Activated CD8-positive, alpha-beta memory T cell treated with anti-CD3 and anti-CD28 coated beads, Interleukin-2, amount 10 ng/mL, durations not matched to agents 7 days and 5 days (primary cell): ENCODE measurements at regions of chr7 and their contacts with region 1.

Region 1: DNA sequence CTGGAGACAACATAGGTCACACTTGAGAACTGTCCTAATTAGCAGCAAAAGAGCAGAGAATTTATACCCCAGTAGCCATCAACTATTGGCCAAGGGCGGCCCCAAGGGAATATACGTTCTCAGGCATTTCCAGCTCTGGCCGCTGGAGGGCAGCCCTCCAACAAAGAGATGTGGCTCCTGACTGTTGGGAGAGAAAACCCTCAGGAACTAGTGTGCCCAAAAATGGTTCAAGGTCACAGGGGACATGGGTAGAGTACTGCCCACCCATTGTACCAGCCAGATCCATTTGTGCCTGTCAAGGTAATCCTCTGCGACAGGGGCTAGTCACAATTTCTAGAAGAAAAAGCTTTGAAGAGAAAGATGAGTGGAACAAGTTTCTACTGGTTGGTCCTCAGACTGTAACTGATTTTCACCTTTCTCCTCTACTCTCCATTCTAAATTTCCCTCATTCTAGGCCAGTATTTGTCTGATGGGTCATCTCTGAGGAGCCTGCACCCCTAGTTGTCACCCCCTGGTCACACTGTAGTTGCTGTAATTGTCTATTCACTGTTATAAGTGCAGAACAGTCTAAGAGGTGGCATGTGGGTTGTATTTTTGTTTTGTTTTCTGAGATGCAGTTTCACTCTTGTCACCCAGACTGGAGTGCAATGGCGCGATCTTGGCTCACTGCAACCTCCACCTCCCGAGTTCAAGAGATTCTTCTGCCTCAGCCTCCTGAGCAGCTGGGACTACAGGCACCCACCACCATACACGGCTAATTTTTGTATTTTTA is 14.7 kb upstream of the C7orf33 start:
- DNase-seq: peak; percentile 79
- ATAC-seq: peak; percentile 94
- H3K4me3 Mint-ChIP-seq: no peak overlapping the region
- H3K27ac Mint-ChIP-seq: peak overlapping the region; percentile 22
- H3K4me1 Mint-ChIP-seq: peaks cover 8% of the 10 kb centered on the region
- H3K27me3 Mint-ChIP-seq: peaks cover 29% of the 10 kb centered on the region

Region 2: GRCh38 chr7:148255333-148255732 is 320.5 kb before region 1 on chr7:
- CTCF ChIA-PET with region 1: no interaction called
- DNase-seq: no peak
- ATAC-seq: no peak
- H3K4me3 Mint-ChIP-seq: no peak overlapping the region
- H3K27ac Mint-ChIP-seq: no peak overlapping the region
- H3K4me1 Mint-ChIP-seq: no peaks in the 10 kb centered on the region
- H3K27me3 Mint-ChIP-seq: no peaks in the 10 kb centered on the region

Region 3: DNA sequence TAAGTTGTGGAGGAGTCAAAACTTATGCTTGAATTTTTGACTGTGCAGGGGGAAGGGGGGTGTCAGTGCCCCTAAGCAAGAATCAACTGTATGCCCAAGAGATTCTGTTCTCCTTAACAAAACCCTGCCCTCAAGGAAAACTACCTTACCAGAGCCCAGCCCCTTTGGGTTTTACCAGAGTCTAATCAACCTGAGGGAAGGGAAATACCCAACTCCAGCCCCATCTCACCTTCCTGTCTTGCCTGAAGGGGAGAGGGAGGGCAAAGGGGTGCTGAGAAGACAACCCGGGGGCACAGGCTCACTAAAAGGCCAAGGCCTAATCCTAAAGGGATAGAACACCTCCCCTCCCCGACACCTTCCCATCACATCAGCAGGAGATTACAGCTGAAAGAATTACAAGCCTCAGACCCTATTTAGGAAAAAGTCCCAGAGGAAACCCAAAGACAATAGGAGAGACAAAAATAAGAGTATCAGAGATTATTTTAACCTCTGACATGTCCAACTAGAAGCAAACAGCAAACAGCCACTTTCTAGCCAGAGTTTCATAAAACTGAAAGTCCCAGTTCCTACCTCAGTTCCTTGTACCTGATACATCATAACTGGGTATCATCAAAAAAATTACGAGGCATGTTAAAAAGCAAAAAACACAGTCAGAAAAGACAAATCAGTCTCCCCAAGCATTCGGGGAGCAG is 12.1 kb before region 1 on chr7:
- CTCF ChIA-PET with region 1: interaction called, 34 read pairs
- DNase-seq: no peak
- ATAC-seq: no peak
- H3K4me3 Mint-ChIP-seq: peak overlapping the region; percentile 51
- H3K27ac Mint-ChIP-seq: peak overlapping the region; percentile 95
- H3K4me1 Mint-ChIP-seq: peaks cover 26% of the 10 kb centered on the region
- H3K27me3 Mint-ChIP-seq: peaks cover 23% of the 10 kb centered on the region